A549 (cell line): ENCODE measurements at regions of chr11 and their contacts with region 1.

Region 1: DNA sequence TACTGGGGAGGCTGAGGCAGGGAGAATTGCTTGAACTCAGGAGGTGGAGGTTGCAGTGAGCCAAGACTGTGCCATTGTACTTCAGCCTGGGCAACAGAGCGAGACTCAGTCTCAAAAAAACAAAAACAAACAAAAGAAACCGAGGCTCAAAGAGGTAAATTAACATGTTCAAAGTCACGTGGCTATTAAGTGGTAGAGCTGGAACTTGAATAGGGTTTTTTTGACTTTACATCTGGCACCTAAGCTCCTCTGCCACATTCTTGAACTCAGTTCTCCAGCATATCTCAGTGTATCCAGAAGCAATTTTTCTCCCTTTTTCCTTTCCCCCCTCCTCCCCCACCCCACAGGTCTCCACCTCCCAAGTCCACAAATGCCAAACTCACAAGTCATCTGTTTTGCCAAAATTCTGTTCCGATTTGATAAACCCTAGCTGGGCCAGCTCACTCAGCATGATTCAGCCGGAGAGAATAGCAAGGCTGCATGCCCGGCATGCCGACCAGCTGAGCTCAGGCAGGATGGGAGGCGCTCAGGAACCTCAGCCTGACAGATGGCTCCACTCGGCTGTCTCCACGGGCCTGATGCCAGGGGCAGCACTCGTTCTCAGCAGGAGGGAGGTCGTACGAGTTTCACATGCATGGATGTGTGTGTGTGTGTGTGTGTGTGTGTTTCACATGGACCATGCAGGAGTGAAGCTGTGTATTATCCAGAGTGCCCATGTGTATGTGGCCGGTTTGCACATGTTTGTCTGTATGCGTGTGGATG is 63.2 kb upstream of the RRAS2 start:
- DNase-seq: peak; percentile 85 to 88
- ATAC-seq: peak; percentile 97 to 98
- H3K4me3 ChIP-seq: no peak overlapping the region
- H3K27ac ChIP-seq: peak overlapping the region; percentile 75 to 85
- H3K4me1 ChIP-seq: peaks cover 37% of the 10 kb centered on the region
- CTCF ChIP-seq: no peak
- EP300 ChIP-seq: peak in 1 of 2 experiments; percentile 63; a peak in 1 of 5 replicates
- POLR2A ChIP-seq: no peak
- RAD21 ChIP-seq: no peak

Region 2: DNA sequence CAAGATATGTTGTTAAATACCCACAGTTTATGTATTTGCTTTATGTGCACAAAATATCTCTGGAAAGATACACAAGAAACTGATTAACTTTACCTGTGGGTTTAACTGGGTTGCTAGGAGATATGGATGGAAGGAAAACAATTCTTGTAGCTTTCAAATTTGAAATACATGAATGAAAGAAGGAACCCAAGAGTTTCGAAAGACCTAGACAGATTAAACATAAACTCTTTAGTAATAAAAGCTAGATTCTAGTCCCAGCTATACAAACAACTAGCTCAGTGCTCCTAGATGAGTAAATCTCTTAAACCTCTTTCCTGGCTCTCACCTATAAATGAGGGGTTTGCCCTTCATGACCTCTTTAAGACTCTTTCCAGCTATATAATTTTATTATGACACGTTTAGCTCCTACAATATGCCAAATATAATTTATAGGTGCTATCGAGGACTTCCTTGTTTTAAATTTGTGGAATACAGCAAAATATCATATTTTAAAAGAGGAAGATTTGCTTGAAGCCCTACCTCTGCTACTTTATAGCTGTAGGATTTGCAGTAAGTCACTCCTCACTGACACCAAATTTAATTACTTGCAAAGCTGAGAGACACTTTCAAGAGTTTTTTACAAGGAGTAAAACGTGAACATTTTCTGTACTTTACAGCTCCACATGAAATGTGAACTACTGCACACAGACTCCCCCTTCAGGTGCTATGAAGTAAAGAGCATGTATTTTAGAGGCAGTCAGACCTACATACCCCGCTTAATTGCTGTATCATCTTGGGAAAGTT is 113.9 kb before region 1 on chr11:
- CTCF ChIA-PET with region 1: interaction called, 127 read pairs
- POLR2A ChIA-PET with region 1: interaction called, 6 read pairs
- DNase-seq: peak; percentile 59 to 66
- ATAC-seq: peak; percentile 84 to 90; a peak in 5 of 6 replicates
- H3K4me3 ChIP-seq: no peak overlapping the region
- H3K27ac ChIP-seq: peak overlapping the region; percentile 55 to 67; a peak in 5 of 6 replicates
- H3K4me1 ChIP-seq: peaks cover 39% of the 10 kb centered on the region
- CTCF ChIP-seq: peak; percentile 62
- EP300 ChIP-seq: no peak
- POLR2A ChIP-seq: no peak
- RAD21 ChIP-seq: peak; percentile 38 to 39; a peak in 3 of 5 replicates

Region 3: DNA sequence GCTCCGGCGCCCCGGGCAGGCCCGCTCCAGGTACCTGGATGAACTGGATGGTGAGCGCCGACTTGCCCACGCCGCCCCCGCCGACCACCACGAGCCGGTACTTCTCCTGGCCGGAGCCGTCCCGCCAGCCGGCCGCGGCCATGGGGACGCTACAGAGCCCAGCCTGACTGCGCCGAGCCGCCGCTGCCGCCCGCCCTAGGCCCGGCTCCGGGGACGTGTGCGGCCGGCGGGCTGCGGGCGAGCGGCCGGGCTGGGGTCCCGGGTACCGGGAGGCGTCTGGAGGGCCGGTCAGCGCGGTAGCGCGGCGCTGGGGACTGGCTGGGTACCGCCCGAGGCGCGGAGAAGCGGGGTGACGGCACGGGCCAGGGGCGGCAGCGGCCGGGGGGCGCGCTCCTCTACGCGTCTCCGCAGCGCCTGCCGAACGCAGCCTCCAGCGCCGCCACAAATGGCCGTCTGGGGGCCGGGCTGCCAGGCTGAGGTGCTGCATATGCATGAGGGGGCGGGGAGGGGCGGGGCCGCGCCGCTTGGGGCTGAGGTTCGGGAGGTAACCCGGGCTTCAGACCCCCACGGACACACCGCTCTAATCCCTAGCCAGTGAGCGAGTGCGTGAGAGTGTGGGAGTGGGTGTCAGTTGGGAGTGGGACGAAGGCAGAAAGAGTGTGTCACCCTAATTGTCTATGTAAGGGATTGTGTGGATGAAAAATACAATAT is 63.3 kb before region 1 on chr11 and contains the start of gene RRAS2:
- CTCF ChIA-PET with region 1: interaction called, 14 read pairs
- POLR2A ChIA-PET with region 1: interaction called, 4 read pairs
- DNase-seq: peak; percentile 70 to 78
- ATAC-seq: peak; percentile 88 to 90
- H3K4me3 ChIP-seq: peak within 1 kb of the TSS; percentile 84
- H3K27ac ChIP-seq: peak within 1 kb of the TSS; percentile 86 to 99
- H3K4me1 ChIP-seq: peaks cover 12% of the 10 kb centered on the region; the same call in 2 of the 3 replicates
- CTCF ChIP-seq: no peak
- EP300 ChIP-seq: no peak
- POLR2A ChIP-seq: peak; percentile 92
- RAD21 ChIP-seq: 0 out of 5 replicates have a peak, but pooled peaks of 1 of the 2 experiments have one; percentile 9
- polyA plus RNA-seq, gene RRAS2: 39.7 and 48.2 TPM in 2 replicates

Region 4: GRCh38 chr11:14380947-14381561 is 41.2 kb before region 1 on chr11:
- CTCF ChIA-PET with region 1: interaction called, 8 read pairs
- POLR2A ChIA-PET with region 1: interaction called, 12 read pairs
- DNase-seq: peak; percentile 58 to 72
- ATAC-seq: peak; percentile 95 to 96
- H3K4me3 ChIP-seq: peak overlapping the region; percentile 50
- H3K27ac ChIP-seq: peak overlapping the region; percentile 83 to 95
- H3K4me1 ChIP-seq: peaks cover 21% of the 10 kb centered on the region
- CTCF ChIP-seq: no peak
- EP300 ChIP-seq: no peak
- POLR2A ChIP-seq: peak; percentile 76
- RAD21 ChIP-seq: no peak; a peak in 1 of 5 replicates

Region 5: GRCh38 chr11:14454861-14455632 is 32.8 kb after region 1 on chr11:
- CTCF ChIA-PET with region 1: interaction called, 77 read pairs
- POLR2A ChIA-PET with region 1: interaction called, 9 read pairs
- DNase-seq: peak in 1 of 2 experiments; percentile 37
- ATAC-seq: peak; percentile 63 to 74; a peak in 5 of 6 replicates
- H3K4me3 ChIP-seq: no peak overlapping the region
- H3K27ac ChIP-seq: peak overlapping the region in 1 of 2 experiments; percentile 63; a peak in 3 of 6 replicates
- H3K4me1 ChIP-seq: 0 out of 3 replicates have a peak, but pooled peaks cover 3% of the 10 kb centered on the region
- CTCF ChIP-seq: peak; percentile 88
- EP300 ChIP-seq: no peak
- POLR2A ChIP-seq: no peak
- RAD21 ChIP-seq: peak; percentile 66 to 68

Region 6: GRCh38 chr11:14872032-14872431 is 449.8 kb after region 1 on chr11:
- CTCF ChIA-PET with region 1: no interaction called
- POLR2A ChIA-PET with region 1: no interaction called
- DNase-seq: no peak
- ATAC-seq: no peak
- H3K4me3 ChIP-seq: no peak overlapping the region
- H3K27ac ChIP-seq: no peak overlapping the region
- H3K4me1 ChIP-seq: peaks cover 7% of the 10 kb centered on the region; the same call in 2 of the 3 replicates
- CTCF ChIP-seq: no peak
- EP300 ChIP-seq: no peak
- POLR2A ChIP-seq: no peak
- RAD21 ChIP-seq: no peak